ENCODE measurements at regions of chr19 and their contacts with region 1.

Region 1: GRCh38 chr19:49937750-49938381 is 8.6 kb upstream of the NUP62 start:
- DNase-seq: peak; percentile 78 to 91 (median 89)
- ATAC-seq: peak; percentile 85 to 87
- H3K4me3 ChIP-seq: no peak overlapping the region
- H3K27ac ChIP-seq: no peak overlapping the region
- H3K4me1 ChIP-seq: no peaks in the 10 kb centered on the region
- H3K27me3 ChIP-seq: no peaks in the 10 kb centered on the region

Region 2: DNA sequence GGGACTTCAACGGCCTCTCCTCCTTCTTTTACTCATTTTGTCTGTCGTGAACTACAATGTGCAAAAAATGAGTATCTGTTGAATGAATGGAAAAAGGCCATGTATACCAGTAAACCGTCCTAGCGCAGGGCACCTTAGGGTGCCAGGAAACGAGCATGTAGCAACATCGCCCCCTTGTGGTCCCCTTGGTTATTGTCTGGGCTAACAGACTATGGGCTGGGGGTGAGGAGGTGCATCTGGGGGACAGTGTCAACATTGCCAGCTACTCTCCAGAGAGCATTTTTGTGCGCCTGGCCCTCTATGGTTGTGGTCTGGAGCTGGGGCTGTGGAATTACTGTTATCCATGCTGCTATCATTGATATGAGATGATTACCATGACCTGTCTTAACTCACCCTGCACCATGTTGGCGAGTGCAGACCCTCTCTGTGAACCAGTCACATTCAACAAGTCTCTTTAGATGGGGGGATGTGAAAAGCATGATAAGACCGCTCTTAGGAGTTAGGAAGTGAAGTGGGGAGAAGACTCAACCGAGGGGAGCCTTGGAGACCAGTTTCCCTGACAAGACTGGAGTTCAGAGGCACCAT is 45.9 kb after region 1 on chr19:
- intact Hi-C with region 1: loop called (anchors 1 to 5 kb)
- DNase-seq: peak in 2 of 3 donors; percentile 64 to 84
- ATAC-seq: peak; percentile 47 to 58
- H3K4me3 ChIP-seq: no peak overlapping the region
- H3K27ac ChIP-seq: no peak overlapping the region
- H3K4me1 ChIP-seq: no peaks in the 10 kb centered on the region
- H3K27me3 ChIP-seq: no peaks in the 10 kb centered on the region

Measured in right cardiac atrium (tissue), 5 donors.